WTC11 (cell line): ENCODE measurements at regions of chr3 and their contacts with region 1.

Region 1: GRCh38 chr3:49673715-49674496 is at the start of gene APEH:
- DNase-seq: peak; percentile 98
- ATAC-seq: peak; percentile 85
- H3K4me3 Mint-ChIP-seq: peak within 1 kb of the TSS; percentile 81
- H3K27ac Mint-ChIP-seq: peak within 1 kb of the TSS; percentile 94
- H3K4me1 Mint-ChIP-seq: peaks cover 21% of the 10 kb centered on the region
- H3K27me3 Mint-ChIP-seq: no peaks in the 10 kb centered on the region
- CTCF ChIP-seq: no peak
- total RNA-seq, gene APEH: 270 to 276 TPM (median 273 TPM) in 3 replicates

Region 2: GRCh38 chr3:49484471-49484870 is 189.4 kb before region 1 on chr3:
- CTCF ChIA-PET with region 1: interaction called, 10 read pairs
- POLR2A ChIA-PET with region 1: no interaction called
- DNase-seq: no peak
- ATAC-seq: peak; percentile 33; the same call in 1 of the 2 replicates
- H3K4me3 Mint-ChIP-seq: no peak overlapping the region
- H3K27ac Mint-ChIP-seq: peak overlapping the region; percentile 78; the same call in 1 of the 2 replicates
- H3K4me1 Mint-ChIP-seq: peaks cover 18% of the 10 kb centered on the region
- H3K27me3 Mint-ChIP-seq: no peaks in the 10 kb centered on the region
- CTCF ChIP-seq: no peak

Region 3: GRCh38 chr3:49553692-49554632 is 119.9 kb before region 1 on chr3 and contains the start of gene BSN:
- CTCF ChIA-PET with region 1: interaction called, 12 read pairs
- POLR2A ChIA-PET with region 1: interaction called, 3 read pairs
- DNase-seq: peak; percentile 93
- ATAC-seq: peak; percentile 75
- H3K4me3 Mint-ChIP-seq: peak within 1 kb of the TSS; percentile 99
- H3K27ac Mint-ChIP-seq: peak within 1 kb of the TSS; percentile 97
- H3K4me1 Mint-ChIP-seq: peaks cover 17% of the 10 kb centered on the region
- H3K27me3 Mint-ChIP-seq: peaks cover 25% of the 10 kb centered on the region
- CTCF ChIP-seq: no peak
- total RNA-seq, gene BSN: 1.7 to 2.8 TPM (median 2.4 TPM) in 3 replicates

Region 4: DNA sequence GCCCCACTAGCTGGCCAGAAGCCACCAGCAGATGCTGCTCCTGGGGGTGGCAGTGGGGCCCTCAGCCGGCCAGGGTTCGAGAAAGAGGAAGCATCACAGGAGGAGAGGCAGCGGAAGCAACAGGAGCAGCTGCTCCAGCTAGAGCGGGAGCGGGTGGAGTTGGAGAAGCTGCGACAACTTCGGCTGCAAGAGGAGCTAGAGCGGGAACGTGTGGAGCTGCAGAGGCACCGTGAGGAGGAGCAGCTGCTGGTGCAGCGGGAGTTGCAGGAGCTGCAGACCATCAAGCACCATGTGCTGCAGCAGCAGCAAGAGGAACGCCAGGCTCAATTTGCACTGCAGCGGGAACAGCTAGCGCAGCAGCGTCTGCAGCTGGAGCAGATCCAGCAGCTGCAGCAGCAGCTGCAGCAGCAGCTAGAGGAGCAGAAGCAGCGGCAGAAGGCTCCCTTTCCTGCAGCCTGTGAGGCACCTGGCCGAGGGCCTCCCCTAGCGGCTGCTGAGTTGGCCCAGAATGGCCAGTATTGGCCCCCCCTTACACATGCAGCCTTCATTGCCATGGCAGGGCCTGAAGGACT is 17.3 kb before region 1 on chr3:
- CTCF ChIA-PET with region 1: interaction called, 19 read pairs
- POLR2A ChIA-PET with region 1: no interaction called
- DNase-seq: no peak
- ATAC-seq: no peak
- H3K4me3 Mint-ChIP-seq: no peak overlapping the region
- H3K27ac Mint-ChIP-seq: no peak overlapping the region
- H3K4me1 Mint-ChIP-seq: no peaks in the 10 kb centered on the region
- H3K27me3 Mint-ChIP-seq: no peaks in the 10 kb centered on the region
- CTCF ChIP-seq: no peak

Region 5: DNA sequence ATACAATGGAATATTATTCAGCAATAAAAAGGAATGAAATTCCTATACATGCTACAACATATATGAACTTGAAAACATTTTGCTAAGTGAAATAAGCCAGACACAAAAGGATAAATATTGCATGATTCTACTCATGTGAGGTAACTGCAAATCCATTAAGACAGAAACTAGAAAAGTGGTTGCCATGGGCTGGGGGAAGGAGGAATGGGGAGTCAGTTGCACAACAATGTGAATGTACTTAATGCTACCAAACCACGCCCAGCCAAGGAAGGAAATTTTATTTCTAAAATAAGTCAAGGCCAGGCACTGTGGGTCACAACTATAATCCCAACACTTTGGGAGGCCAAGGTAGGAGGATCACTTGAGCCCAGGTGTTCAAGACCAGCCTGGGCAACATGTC is 59.6 kb after region 1 on chr3:
- CTCF ChIA-PET with region 1: no interaction called
- POLR2A ChIA-PET with region 1: no interaction called
- DNase-seq: no peak
- ATAC-seq: no peak
- H3K4me3 Mint-ChIP-seq: no peak overlapping the region
- H3K27ac Mint-ChIP-seq: no peak overlapping the region
- H3K4me1 Mint-ChIP-seq: no peaks in the 10 kb centered on the region
- H3K27me3 Mint-ChIP-seq: no peaks in the 10 kb centered on the region
- CTCF ChIP-seq: no peak

Region 6: DNA sequence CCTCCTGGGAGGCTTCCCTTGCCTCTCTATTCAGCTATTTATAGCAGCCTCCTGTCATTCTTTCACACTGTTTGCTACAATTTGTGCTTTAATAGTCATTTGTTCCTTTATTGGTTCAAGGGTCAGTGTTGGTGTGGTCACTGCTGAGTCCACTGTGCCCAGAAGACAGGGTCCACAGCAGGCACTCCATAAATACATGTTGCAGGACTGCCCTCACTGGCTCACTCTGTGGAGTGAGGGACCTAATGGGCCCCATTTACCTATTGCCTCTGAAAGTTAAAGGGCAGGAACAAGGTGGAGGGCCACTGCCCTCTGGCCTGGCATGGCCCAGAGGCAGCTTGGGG is 213.0 kb after region 1 on chr3:
- CTCF ChIA-PET with region 1: no interaction called
- POLR2A ChIA-PET with region 1: no interaction called
- DNase-seq: no peak
- ATAC-seq: no peak
- H3K4me3 Mint-ChIP-seq: no peak overlapping the region
- H3K27ac Mint-ChIP-seq: no peak overlapping the region
- H3K4me1 Mint-ChIP-seq: peaks cover 6% of the 10 kb centered on the region
- H3K27me3 Mint-ChIP-seq: no peaks in the 10 kb centered on the region
- CTCF ChIP-seq: no peak